CD8-positive, alpha-beta T cell (primary cell): ENCODE measurements at regions of chr11 and their contacts with region 1.

Region 1: GRCh38 chr11:64069401-64070313 is 33.9 kb downstream of the FLRT1 start:
- DNase-seq: no peak
- ATAC-seq: no peak
- H3K4me3 ChIP-seq: no peak overlapping the region
- H3K4me3 Mint-ChIP-seq: no peak overlapping the region
- H3K27ac ChIP-seq: no peak overlapping the region
- H3K27ac Mint-ChIP-seq: no peak overlapping the region
- H3K4me1 ChIP-seq: peaks cover 15% of the 10 kb centered on the region
- H3K4me1 Mint-ChIP-seq: peaks cover 12% of the 10 kb centered on the region
- H3K27me3 ChIP-seq: no peaks in the 10 kb centered on the region
- H3K27me3 Mint-ChIP-seq: no peaks in the 10 kb centered on the region
- CTCF ChIP-seq: no peak

Region 2: DNA sequence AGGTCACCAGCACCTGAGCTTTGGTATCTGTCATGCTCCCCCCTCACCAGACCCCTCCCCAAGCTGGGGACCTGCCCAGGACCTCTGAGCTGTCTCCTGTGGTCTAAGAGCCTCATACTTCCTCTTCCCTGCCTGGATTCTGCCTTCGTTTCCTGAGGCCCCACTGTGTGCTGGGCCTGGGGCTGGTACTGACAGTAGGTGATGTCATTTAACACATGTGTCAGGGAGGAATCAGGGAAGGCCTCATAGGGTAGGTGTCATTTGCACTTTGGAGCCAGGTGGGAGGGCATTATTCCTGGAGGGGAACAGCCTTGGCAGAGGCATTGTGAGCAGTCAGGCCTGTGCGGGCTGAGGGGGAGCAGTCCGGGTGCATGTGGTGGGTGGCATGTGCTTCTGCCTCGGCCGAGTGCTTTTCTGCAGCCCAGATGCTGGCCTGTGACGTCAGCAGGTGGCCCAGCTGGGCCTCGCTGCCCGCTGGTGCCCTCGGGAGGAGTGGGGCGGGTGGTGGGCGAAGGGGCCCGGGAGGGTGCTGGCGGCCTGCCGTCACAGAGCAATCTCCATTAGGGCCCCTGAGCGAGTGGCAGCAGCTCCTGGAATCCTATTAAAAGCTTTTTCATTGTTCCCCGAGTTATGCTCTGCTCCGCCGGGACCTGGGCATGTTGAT is 24.8 kb before region 1 on chr11:
- CTCF ChIA-PET with region 1: no interaction called
- POLR2A ChIA-PET with region 1: no interaction called
- intact Hi-C with region 1: loop called in 1 of 2 experiments (anchors 1 kb)
- DNase-seq: no peak
- ATAC-seq: no peak
- H3K4me3 ChIP-seq: no peak overlapping the region
- H3K4me3 Mint-ChIP-seq: no peak overlapping the region
- H3K27ac ChIP-seq: no peak overlapping the region
- H3K27ac Mint-ChIP-seq: no peak overlapping the region
- H3K4me1 ChIP-seq: no peaks in the 10 kb centered on the region
- H3K4me1 Mint-ChIP-seq: no peaks in the 10 kb centered on the region
- H3K27me3 ChIP-seq: no peaks in the 10 kb centered on the region
- H3K27me3 Mint-ChIP-seq: peaks cover 6% of the 10 kb centered on the region
- CTCF ChIP-seq: no peak